CD4-positive, alpha-beta T cell (primary cell): ENCODE measurements at regions of chr3 and their contacts with region 1.

Region 1: GRCh38 chr3:136861890-136862616 is at the start of gene NCK1:
- DNase-seq: peak; percentile 96 to 99 (median 98)
- ATAC-seq: peak; percentile 95
- H3K4me3 ChIP-seq: peak within 1 kb of the TSS; percentile 93
- H3K4me3 Mint-ChIP-seq: peak within 1 kb of the TSS; percentile 92
- H3K27ac ChIP-seq: peak within 1 kb of the TSS; percentile 93 to 94
- H3K27ac Mint-ChIP-seq: peak within 1 kb of the TSS; percentile 97
- H3K4me1 ChIP-seq: peaks cover 37% of the 10 kb centered on the region
- H3K4me1 Mint-ChIP-seq: peaks cover 65% of the 10 kb centered on the region
- H3K27me3 ChIP-seq: no peaks in the 10 kb centered on the region
- H3K27me3 Mint-ChIP-seq: no peaks in the 10 kb centered on the region
- CTCF ChIP-seq: no peak
- total RNA-seq, gene NCK1: 52.9 to 55.0 TPM

Region 2: GRCh38 chr3:136196401-136197158 is 665.5 kb before region 1 on chr3:
- CTCF ChIA-PET with region 1: no interaction called
- POLR2A ChIA-PET with region 1: interaction called, 56 read pairs
- intact Hi-C with region 1: loop called (anchors 5 kb)
- DNase-seq: peak; percentile 95 to 100 (median 98)
- ATAC-seq: peak; percentile 62
- H3K4me3 ChIP-seq: peak overlapping the region; percentile 95
- H3K4me3 Mint-ChIP-seq: peak overlapping the region; percentile 98
- H3K27ac ChIP-seq: peak overlapping the region; percentile 91 to 99
- H3K27ac Mint-ChIP-seq: peak overlapping the region; percentile 98
- H3K4me1 ChIP-seq: peaks cover 16% of the 10 kb centered on the region
- H3K4me1 Mint-ChIP-seq: peaks cover 36% of the 10 kb centered on the region
- H3K27me3 ChIP-seq: no peaks in the 10 kb centered on the region
- H3K27me3 Mint-ChIP-seq: peaks cover 5% of the 10 kb centered on the region
- CTCF ChIP-seq: no peak

Region 3: GRCh38 chr3:136535906-136536305 is 326.1 kb before region 1 on chr3:
- CTCF ChIA-PET with region 1: no interaction called
- POLR2A ChIA-PET with region 1: no interaction called
- intact Hi-C with region 1: no loop called
- DNase-seq: no peak
- ATAC-seq: no peak
- H3K4me3 ChIP-seq: no peak overlapping the region
- H3K4me3 Mint-ChIP-seq: no peak overlapping the region
- H3K27ac ChIP-seq: no peak overlapping the region
- H3K27ac Mint-ChIP-seq: no peak overlapping the region
- H3K4me1 ChIP-seq: no peaks in the 10 kb centered on the region
- H3K4me1 Mint-ChIP-seq: no peaks in the 10 kb centered on the region
- H3K27me3 ChIP-seq: no peaks in the 10 kb centered on the region
- H3K27me3 Mint-ChIP-seq: no peaks in the 10 kb centered on the region
- CTCF ChIP-seq: no peak

Region 4: GRCh38 chr3:136882572-136882971 is 20.5 kb after region 1 on chr3:
- CTCF ChIA-PET with region 1: interaction called, 9 read pairs
- POLR2A ChIA-PET with region 1: interaction called, 18 read pairs
- intact Hi-C with region 1: loop called in 1 of 2 experiments (anchors 2 kb)
- DNase-seq: peak in 3 of 14 experiments; percentile 34 to 51 (median 38)
- ATAC-seq: peak; percentile 74
- H3K4me3 ChIP-seq: no peak overlapping the region
- H3K4me3 Mint-ChIP-seq: peak overlapping the region; percentile 36
- H3K27ac ChIP-seq: no peak overlapping the region
- H3K27ac Mint-ChIP-seq: peak overlapping the region; percentile 43
- H3K4me1 ChIP-seq: peaks cover 43% of the 10 kb centered on the region
- H3K4me1 Mint-ChIP-seq: peaks cover 87% of the 10 kb centered on the region
- H3K27me3 ChIP-seq: no peaks in the 10 kb centered on the region
- H3K27me3 Mint-ChIP-seq: no peaks in the 10 kb centered on the region
- CTCF ChIP-seq: no peak

Region 5: DNA sequence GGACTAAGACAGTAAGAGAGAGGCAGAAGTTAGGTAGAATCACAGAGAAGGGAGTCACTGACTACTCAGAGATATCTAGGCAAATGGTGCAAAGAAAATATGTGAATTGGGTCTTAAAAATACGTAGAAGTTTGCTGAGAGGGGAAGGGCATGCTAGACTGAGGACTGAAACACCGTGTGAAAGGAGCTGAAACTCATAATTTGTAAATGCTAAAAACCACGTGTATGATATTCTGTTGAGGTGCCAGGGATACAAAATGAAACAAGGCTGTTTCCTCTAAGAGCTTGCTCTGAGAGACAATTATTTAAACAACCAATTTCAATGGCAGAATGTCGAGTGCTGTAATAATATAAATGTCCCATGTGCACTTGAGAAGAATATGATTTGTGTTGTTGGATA is 47.1 kb after region 1 on chr3:
- CTCF ChIA-PET with region 1: interaction called, 8 read pairs
- POLR2A ChIA-PET with region 1: interaction called, 17 read pairs
- intact Hi-C with region 1: no loop called
- DNase-seq: peak in 1 of 14 experiments; percentile 27
- ATAC-seq: no peak
- H3K4me3 ChIP-seq: no peak overlapping the region
- H3K4me3 Mint-ChIP-seq: peak overlapping the region; percentile 17
- H3K27ac ChIP-seq: peak overlapping the region in 1 of 2 donors; percentile 38
- H3K27ac Mint-ChIP-seq: peak overlapping the region; percentile 32
- H3K4me1 ChIP-seq: peaks cover 28% of the 10 kb centered on the region
- H3K4me1 Mint-ChIP-seq: peaks cover 80% of the 10 kb centered on the region
- H3K27me3 ChIP-seq: no peaks in the 10 kb centered on the region
- H3K27me3 Mint-ChIP-seq: no peaks in the 10 kb centered on the region
- CTCF ChIP-seq: no peak

Region 6: DNA sequence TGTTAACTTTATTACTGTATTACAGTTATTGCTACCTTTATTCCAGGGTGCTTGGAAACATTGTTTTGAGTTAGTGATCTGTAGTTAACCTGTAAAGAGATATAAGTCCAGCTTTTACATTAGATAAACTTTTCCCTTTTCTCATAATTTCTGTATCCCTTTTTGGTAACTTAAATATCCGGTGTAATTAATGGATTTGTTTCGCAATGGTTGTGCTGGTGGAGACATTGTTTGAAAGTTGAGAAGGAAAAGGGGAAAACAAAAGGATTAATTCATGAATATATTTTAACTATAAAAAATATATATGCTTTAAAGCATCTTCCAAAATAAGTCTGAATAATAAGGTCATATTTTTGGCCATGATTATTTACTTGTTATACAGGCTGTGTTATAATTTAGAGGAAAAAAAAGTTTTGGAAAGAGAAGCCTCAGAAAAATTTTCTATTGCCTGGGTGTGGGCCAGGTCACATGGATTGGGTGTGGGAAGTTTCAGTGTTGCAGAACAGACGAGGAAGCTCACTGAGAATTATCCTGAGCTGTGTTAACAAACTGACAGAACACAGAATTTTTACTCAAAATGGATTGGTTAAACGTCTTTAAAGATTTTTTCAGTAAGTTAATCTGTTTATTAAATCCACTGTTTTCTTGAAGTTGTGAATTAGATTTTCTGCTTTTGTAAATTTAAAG is 68.1 kb after region 1 on chr3:
- CTCF ChIA-PET with region 1: no interaction called
- POLR2A ChIA-PET with region 1: interaction called, 12 read pairs
- intact Hi-C with region 1: no loop called
- DNase-seq: peak in 1 of 14 experiments; percentile 25
- ATAC-seq: no peak
- H3K4me3 ChIP-seq: no peak overlapping the region
- H3K4me3 Mint-ChIP-seq: no peak overlapping the region
- H3K27ac ChIP-seq: no peak overlapping the region
- H3K27ac Mint-ChIP-seq: no peak overlapping the region
- H3K4me1 ChIP-seq: peaks cover 4% of the 10 kb centered on the region
- H3K4me1 Mint-ChIP-seq: peaks cover 75% of the 10 kb centered on the region
- H3K27me3 ChIP-seq: no peaks in the 10 kb centered on the region
- H3K27me3 Mint-ChIP-seq: no peaks in the 10 kb centered on the region
- CTCF ChIP-seq: no peak

Region 7: GRCh38 chr3:137013955-137014688 is 152.1 kb after region 1 on chr3:
- CTCF ChIA-PET with region 1: interaction called, 8 read pairs
- POLR2A ChIA-PET with region 1: interaction called, 24 read pairs
- intact Hi-C with region 1: loop called (anchors 5 kb)
- DNase-seq: peak; percentile 67 to 91 (median 82)
- ATAC-seq: peak; percentile 89
- H3K4me3 ChIP-seq: peak overlapping the region; percentile 42
- H3K4me3 Mint-ChIP-seq: peak overlapping the region; percentile 67
- H3K27ac ChIP-seq: no peak overlapping the region
- H3K27ac Mint-ChIP-seq: no peak overlapping the region
- H3K4me1 ChIP-seq: peaks cover 9% of the 10 kb centered on the region
- H3K4me1 Mint-ChIP-seq: peaks cover 9% of the 10 kb centered on the region
- H3K27me3 ChIP-seq: no peaks in the 10 kb centered on the region
- H3K27me3 Mint-ChIP-seq: no peaks in the 10 kb centered on the region
- CTCF ChIP-seq: peak; percentile 87